ENCODE measurements at regions of chr9 and their contacts with region 1.

Region 1: GRCh38 chr9:10605388-10605787 is 7.4 kb downstream of the PTPRD start:
- DNase-seq: no peak
- ATAC-seq: no peak
- H3K4me3 ChIP-seq: no peak overlapping the region
- H3K4me3 Mint-ChIP-seq: no peak overlapping the region
- H3K27ac ChIP-seq: no peak overlapping the region
- H3K27ac Mint-ChIP-seq: no peak overlapping the region
- H3K4me1 ChIP-seq: no peaks in the 10 kb centered on the region
- H3K4me1 Mint-ChIP-seq: no peaks in the 10 kb centered on the region
- H3K27me3 ChIP-seq: no peaks in the 10 kb centered on the region
- H3K27me3 Mint-ChIP-seq: peaks cover under 1% of the 10 kb centered on the region
- CTCF ChIP-seq: no peak

Region 2: GRCh38 chr9:9942764-9943424 is 662.5 kb before region 1 on chr9:
- CTCF ChIA-PET with region 1: no interaction called
- POLR2A ChIA-PET with region 1: no interaction called
- intact Hi-C with region 1: no loop called
- DNase-seq: peak; percentile 2 to 64 (median 24)
- ATAC-seq: peak; percentile 49
- H3K4me3 ChIP-seq: no peak overlapping the region
- H3K4me3 Mint-ChIP-seq: no peak overlapping the region
- H3K27ac ChIP-seq: no peak overlapping the region
- H3K27ac Mint-ChIP-seq: no peak overlapping the region
- H3K4me1 ChIP-seq: no peaks in the 10 kb centered on the region
- H3K4me1 Mint-ChIP-seq: no peaks in the 10 kb centered on the region
- H3K27me3 ChIP-seq: no peaks in the 10 kb centered on the region
- H3K27me3 Mint-ChIP-seq: no peaks in the 10 kb centered on the region
- CTCF ChIP-seq: peak; percentile 91

Region 3: GRCh38 chr9:10661376-10661775 is 56.0 kb after region 1 on chr9:
- CTCF ChIA-PET with region 1: no interaction called
- POLR2A ChIA-PET with region 1: no interaction called
- intact Hi-C with region 1: loop called in 1 of 2 experiments (anchors 10 kb)
- DNase-seq: no peak
- ATAC-seq: no peak
- H3K4me3 ChIP-seq: no peak overlapping the region
- H3K4me3 Mint-ChIP-seq: no peak overlapping the region
- H3K27ac ChIP-seq: no peak overlapping the region
- H3K27ac Mint-ChIP-seq: no peak overlapping the region
- H3K4me1 ChIP-seq: no peaks in the 10 kb centered on the region
- H3K4me1 Mint-ChIP-seq: no peaks in the 10 kb centered on the region
- H3K27me3 ChIP-seq: no peaks in the 10 kb centered on the region
- H3K27me3 Mint-ChIP-seq: no peaks in the 10 kb centered on the region
- CTCF ChIP-seq: no peak

Measured in CD4-positive, alpha-beta T cell (primary cell).